ENCODE measurements at regions of chr1 and their contacts with region 1.

Region 1: GRCh38 chr1:28552758-28553663 is at the start of gene TRNAU1AP:
- DNase-seq: peak; percentile 98
- H3K4me3 ChIP-seq: peak within 1 kb of the TSS; percentile 67 to 98 (median 74)
- H3K27ac ChIP-seq: peak within 1 kb of the TSS; percentile 84 to 93 (median 87)
- H3K4me1 ChIP-seq: peaks cover 11 to 21% (median 19%) of the 10 kb centered on the region in 4 donors
- H3K27me3 ChIP-seq: no peaks in the 10 kb centered on the region
- CTCF ChIP-seq: peak in 1 of 3 experiments; percentile 45
- EP300 ChIP-seq: no peak
- POLR2A ChIP-seq: peak; percentile 77
- total RNA-seq, gene TRNAU1AP: 19.4 to 34.1 (median 23.2) TPM

Region 2: DNA sequence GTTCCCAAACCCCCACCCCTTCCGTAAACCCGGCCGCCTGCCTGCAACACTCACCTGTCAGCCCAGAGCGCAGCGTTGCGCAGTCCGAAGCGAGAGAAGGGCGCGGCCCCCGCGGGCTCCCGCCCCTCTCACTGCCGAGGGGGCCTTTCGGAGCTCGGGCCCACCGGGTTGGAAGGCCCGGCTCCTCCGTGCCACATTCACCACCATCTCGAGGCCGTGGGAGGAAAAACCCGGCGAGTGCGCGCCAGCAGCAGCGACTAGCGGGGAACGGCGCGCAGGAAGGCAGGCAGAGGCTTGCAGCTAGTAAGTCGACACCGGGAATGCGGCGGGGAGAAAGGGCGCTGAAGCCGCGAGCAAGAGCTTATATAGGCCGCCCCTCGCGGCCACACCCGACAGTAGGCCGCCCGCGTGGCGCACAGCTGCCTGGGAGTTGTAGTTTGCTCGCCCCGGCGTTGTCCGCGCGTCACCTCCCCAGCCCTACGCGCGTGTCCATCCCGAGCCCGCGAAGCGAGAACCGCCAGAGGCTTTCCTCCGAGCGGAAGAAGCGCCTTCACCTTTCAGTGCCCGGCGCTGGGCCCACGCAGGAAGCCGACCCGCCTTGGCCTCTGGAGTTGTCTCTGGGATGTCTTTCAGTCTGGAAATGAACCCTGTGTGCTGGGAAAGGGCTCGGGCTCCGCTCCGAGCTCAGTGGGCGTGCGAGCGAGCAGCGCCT is 28.7 kb after region 1 on chr1:
- intact Hi-C with region 1: loop called (anchors 2 kb)
- DNase-seq: peak; percentile 99
- H3K4me3 ChIP-seq: peak overlapping the region; percentile 85 to 100 (median 92)
- H3K27ac ChIP-seq: peak overlapping the region; percentile 87 to 96 (median 92)
- H3K4me1 ChIP-seq: peaks cover 19 to 37% (median 34%) of the 10 kb centered on the region in 4 donors
- H3K27me3 ChIP-seq: no peaks in the 10 kb centered on the region
- CTCF ChIP-seq: peak; percentile 7 to 32 (median 8)
- EP300 ChIP-seq: no peak
- POLR2A ChIP-seq: peak; percentile 92

Measured in esophagus muscularis mucosa (tissue), 4 donors.